ENCODE measurements at regions of chr18 and their contacts with region 1.

Region 1: GRCh38 chr18:54254265-54254770 is 15.0 kb upstream of the POLI start:
- DNase-seq: no peak
- H3K4me3 ChIP-seq: no peak overlapping the region
- H3K27ac ChIP-seq: peak overlapping the region in 1 of 2 donors; percentile 3
- H3K4me1 ChIP-seq: peaks cover 0 to 68% (median 12%) of the 10 kb centered on the region in 4 donors
- H3K27me3 ChIP-seq: no peaks in the 10 kb centered on the region
- CTCF ChIP-seq: no peak

Region 2: GRCh38 chr18:54119524-54120019 is 134.7 kb before region 1 on chr18:
- intact Hi-C with region 1: no loop called
- DNase-seq: no peak
- H3K4me3 ChIP-seq: peak overlapping the region in 1 of 2 donors; percentile 13
- H3K27ac ChIP-seq: no peak overlapping the region
- H3K4me1 ChIP-seq: peaks cover 0 to 3% (median 0%) of the 10 kb centered on the region in 4 donors
- H3K27me3 ChIP-seq: no peaks in the 10 kb centered on the region
- CTCF ChIP-seq: peak; percentile 55 to 65

Region 3: GRCh38 chr18:55748227-55748738 is 1494.0 kb after region 1 on chr18:
- intact Hi-C with region 1: loop called (anchors 5 kb)
- DNase-seq: no peak
- H3K4me3 ChIP-seq: no peak overlapping the region
- H3K27ac ChIP-seq: no peak overlapping the region
- H3K4me1 ChIP-seq: no peaks in the 10 kb centered on the region
- H3K27me3 ChIP-seq: no peaks in the 10 kb centered on the region
- CTCF ChIP-seq: no peak

Measured in tibial artery (tissue), 4 donors.